ENCODE measurements at regions of chr7 and their contacts with region 1.

Region 1: DNA sequence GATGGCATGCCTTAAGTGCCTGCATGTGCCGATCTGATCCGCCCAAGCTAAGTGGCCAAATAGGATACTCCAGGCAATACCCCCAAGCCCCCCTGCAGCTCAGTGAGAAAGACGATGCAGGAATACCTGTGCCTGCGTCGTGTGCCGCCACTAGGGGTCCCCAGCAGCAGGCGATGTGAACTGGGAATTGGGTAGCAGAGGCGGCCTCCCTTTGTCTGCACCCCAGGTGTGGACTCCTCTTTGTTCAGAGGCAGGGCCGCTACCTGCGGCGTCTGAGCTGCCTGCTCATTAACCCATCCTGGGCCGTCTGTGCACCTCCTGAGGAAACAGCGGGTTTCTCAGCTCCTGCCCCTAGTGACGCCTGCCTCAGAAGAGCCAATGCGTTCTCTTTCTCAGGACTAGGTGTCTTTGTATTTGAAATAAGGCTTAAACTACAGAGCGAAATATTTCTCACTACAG is 4.8 kb upstream of the CHN2 start:
- DNase-seq: peak; percentile 31 to 80 (median 45)
- H3K4me3 ChIP-seq: no peak overlapping the region
- H3K4me3 Mint-ChIP-seq: peak overlapping the region in 2 of 7 donors; percentile 22 to 51
- H3K27ac ChIP-seq: no peak overlapping the region
- H3K27ac Mint-ChIP-seq: peak overlapping the region in 2 of 8 donors; percentile 23 to 63
- H3K4me1 ChIP-seq: no peaks in the 10 kb centered on the region
- H3K4me1 Mint-ChIP-seq: peaks cover 5 to 24% (median 10%) of the 10 kb centered on the region in 3 donors
- H3K27me3 ChIP-seq: no peaks in the 10 kb centered on the region
- H3K27me3 Mint-ChIP-seq: peaks cover 0 to 5% of the 10 kb centered on the region in 2 donors

Region 2: DNA sequence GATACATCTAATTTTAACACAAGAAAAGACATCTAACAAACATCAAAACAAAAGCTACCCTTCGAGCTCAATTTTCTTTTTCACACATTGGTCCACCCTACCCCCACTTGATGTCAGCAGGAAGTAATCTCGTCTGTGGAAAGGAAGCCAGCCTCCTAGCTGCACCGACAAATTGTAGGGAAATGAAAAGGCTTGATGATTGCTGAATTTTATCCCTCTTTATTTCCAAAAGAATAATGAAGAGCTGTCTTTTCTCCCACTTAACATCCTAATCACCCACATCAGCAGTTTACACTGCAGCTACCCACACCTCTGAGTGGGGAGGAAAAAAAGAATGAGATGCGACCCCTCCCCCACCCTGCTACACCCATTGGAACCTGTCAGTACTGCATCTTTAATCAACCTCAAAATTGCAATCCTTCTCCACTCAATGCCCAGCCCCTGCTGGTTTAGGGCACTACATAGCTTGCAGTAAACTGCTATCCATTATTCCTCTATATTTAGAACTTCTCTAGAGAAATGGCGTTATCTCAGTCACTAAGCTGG is 32.8 kb before region 1 on chr7:
- CTCF ChIA-PET with region 1: interaction called, 15 read pairs
- POLR2A ChIA-PET with region 1: no interaction called
- DNase-seq: peak in 1 of 5 donors; percentile 53
- H3K4me3 ChIP-seq: no peak overlapping the region
- H3K4me3 Mint-ChIP-seq: peak overlapping the region in 4 of 7 donors; percentile 27 to 54 (median 42)
- H3K27ac ChIP-seq: no peak overlapping the region
- H3K27ac Mint-ChIP-seq: peak overlapping the region in 6 of 8 donors; percentile 5 to 54 (median 14)
- H3K4me1 ChIP-seq: no peaks in the 10 kb centered on the region
- H3K4me1 Mint-ChIP-seq: peaks cover 12 to 17% (median 16%) of the 10 kb centered on the region in 3 donors
- H3K27me3 ChIP-seq: no peaks in the 10 kb centered on the region
- H3K27me3 Mint-ChIP-seq: peaks cover 4 to 14% of the 10 kb centered on the region in 2 donors

Region 3: DNA sequence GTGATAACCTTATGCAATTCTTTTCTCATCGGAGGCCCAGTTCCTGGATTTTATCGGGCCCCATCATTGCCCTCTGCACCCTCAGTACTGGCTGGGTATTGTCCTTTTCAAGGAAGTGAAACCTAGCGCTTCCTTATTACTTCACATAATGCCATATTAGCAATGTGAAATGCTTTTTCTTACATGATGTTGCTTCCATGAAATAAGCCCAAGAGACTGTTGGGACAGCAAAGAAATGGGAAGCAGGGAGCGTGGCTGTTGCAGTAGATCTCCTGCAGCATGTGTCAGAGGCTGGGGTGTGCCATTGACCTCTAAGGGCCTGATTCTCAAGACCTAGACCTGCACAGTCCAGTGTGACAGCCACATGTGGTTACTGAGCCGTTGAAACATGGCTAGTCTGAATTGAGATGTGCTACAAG is 12.9 kb after region 1 on chr7:
- CTCF ChIA-PET with region 1: interaction called, 15 read pairs
- POLR2A ChIA-PET with region 1: interaction called, 3 read pairs
- DNase-seq: no peak
- H3K4me3 ChIP-seq: no peak overlapping the region
- H3K4me3 Mint-ChIP-seq: no peak overlapping the region
- H3K27ac ChIP-seq: no peak overlapping the region
- H3K27ac Mint-ChIP-seq: no peak overlapping the region
- H3K4me1 ChIP-seq: peaks cover 10% of the 10 kb centered on the region
- H3K4me1 Mint-ChIP-seq: peaks cover 28 to 70% (median 47%) of the 10 kb centered on the region in 3 donors
- H3K27me3 ChIP-seq: no peaks in the 10 kb centered on the region
- H3K27me3 Mint-ChIP-seq: no peaks in the 10 kb centered on the region

Region 4: GRCh38 chr7:29345600-29345999 is 155.8 kb after region 1 on chr7:
- CTCF ChIA-PET with region 1: interaction called, 11 read pairs
- POLR2A ChIA-PET with region 1: no interaction called
- DNase-seq: peak in 2 of 5 donors; percentile 13 to 58
- H3K4me3 ChIP-seq: no peak overlapping the region
- H3K4me3 Mint-ChIP-seq: no peak overlapping the region
- H3K27ac ChIP-seq: no peak overlapping the region
- H3K27ac Mint-ChIP-seq: no peak overlapping the region
- H3K4me1 ChIP-seq: peaks cover 12% of the 10 kb centered on the region
- H3K4me1 Mint-ChIP-seq: no peaks in the 10 kb centered on the region
- H3K27me3 ChIP-seq: no peaks in the 10 kb centered on the region
- H3K27me3 Mint-ChIP-seq: no peaks in the 10 kb centered on the region

Region 5: GRCh38 chr7:29408841-29409243 is 219.1 kb after region 1 on chr7:
- CTCF ChIA-PET with region 1: interaction called, 147 read pairs
- POLR2A ChIA-PET with region 1: no interaction called
- DNase-seq: peak; percentile 25 to 59 (median 48)
- H3K4me3 ChIP-seq: no peak overlapping the region
- H3K4me3 Mint-ChIP-seq: no peak overlapping the region
- H3K27ac ChIP-seq: no peak overlapping the region
- H3K27ac Mint-ChIP-seq: no peak overlapping the region
- H3K4me1 ChIP-seq: no peaks in the 10 kb centered on the region
- H3K4me1 Mint-ChIP-seq: peaks cover 0 to 3% (median 3%) of the 10 kb centered on the region in 3 donors
- H3K27me3 ChIP-seq: no peaks in the 10 kb centered on the region
- H3K27me3 Mint-ChIP-seq: peaks cover 0 to 3% of the 10 kb centered on the region in 2 donors